Psoas muscle (tissue), 8 donors: ENCODE measurements at regions of chr4 and their contacts with region 1.

Region 1: DNA sequence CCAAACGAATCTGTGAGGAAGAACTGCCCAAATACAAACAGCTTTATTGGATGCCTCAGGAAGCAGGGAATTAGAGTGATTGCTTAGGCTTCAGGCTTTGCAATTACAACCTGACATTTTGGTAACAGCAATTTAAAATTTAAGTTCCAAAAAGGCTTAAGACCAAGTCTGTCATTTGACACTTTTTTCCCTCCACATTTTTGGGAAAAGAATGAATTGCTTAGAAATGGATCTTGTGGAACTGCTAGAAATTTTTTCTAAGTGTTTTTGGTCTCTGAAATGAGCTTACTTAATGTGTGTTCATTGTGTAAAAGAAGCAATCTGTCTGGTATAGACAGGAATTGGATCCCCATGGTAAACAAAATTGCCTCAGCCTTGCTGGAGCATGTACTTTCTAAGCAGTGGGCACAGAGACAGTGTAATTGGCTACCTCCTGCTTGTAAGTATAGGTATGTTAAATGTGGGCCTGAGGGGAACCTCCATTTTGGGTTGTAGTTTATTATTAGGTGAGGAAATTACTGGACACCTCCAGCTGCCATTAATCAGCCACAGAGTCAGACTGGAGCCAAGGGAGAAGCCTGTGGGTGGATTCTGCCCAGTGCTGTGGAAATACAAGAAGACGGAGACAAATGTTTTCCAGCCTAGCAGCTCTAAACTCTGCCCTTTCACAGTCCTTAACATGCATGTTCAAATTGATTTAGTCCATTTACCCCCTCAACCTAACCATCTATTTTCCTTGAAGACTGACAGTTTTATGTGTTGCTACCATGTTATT is 472.9 kb downstream of the SPRY1 start:
- DNase-seq: no peak
- ATAC-seq: peak; percentile 57 to 79 (median 74)
- H3K4me3 ChIP-seq: peak overlapping the region; percentile 3
- H3K27ac ChIP-seq: peak overlapping the region; percentile 78
- H3K4me1 ChIP-seq: peaks cover 28% of the 10 kb centered on the region
- H3K27me3 ChIP-seq: no peaks in the 10 kb centered on the region
- CTCF ChIP-seq: no peak

Region 2: DNA sequence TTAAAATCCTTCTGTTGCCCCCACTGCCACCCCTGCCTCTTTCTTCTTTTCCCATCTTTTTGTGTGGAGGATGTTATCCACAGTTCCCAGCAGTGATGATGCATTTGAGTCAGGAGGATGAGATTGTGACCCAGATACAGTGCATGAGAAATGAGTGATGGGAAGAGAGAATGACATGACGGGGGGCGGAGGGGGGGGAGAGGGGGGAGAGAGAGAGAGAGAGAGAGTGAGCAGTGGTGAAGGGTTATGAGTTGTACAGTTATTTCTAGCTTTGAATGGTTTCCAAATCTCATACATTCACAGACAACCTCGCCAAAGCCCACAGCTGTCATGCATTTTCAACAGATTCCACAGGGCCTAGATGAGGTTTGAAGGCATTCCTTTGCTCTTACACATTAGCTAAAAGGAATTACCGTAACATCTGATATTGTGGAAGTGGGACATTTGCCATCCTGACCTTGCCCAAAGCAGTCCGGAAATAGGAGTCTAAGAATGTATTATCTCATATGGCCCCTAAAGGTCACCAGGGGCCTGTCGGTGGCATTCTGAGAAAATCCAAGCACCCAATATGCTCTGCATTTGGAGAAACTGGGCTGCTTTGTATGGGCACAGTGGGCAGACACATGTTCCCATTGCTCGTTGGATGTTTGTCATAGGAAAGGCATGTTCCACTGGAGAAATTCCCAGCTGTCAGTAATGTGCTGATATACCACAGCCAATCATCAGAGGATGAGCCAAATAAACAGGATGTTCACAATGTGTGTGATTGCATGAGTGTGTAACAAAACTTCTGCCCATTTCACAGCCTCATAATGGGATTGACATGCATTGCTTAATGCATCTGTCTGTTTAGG is 37.1 kb before region 1 on chr4:
- intact Hi-C with region 1: loop called in 1 of 2 experiments (anchors 5 kb)
- DNase-seq: peak; percentile 65 to 82
- ATAC-seq: peak; percentile 91 to 93 (median 92)
- H3K4me3 ChIP-seq: peak overlapping the region; percentile 44
- H3K27ac ChIP-seq: peak overlapping the region; percentile 93
- H3K4me1 ChIP-seq: peaks cover 26% of the 10 kb centered on the region
- H3K27me3 ChIP-seq: no peaks in the 10 kb centered on the region
- CTCF ChIP-seq: no peak